Psoas muscle (tissue), 8 donors: ENCODE measurements at regions of chr6 and their contacts with region 1.

Region 1: GRCh38 chr6:56463443-56463842 is 179.2 kb downstream of the DST start:
- DNase-seq: no peak
- ATAC-seq: no peak
- H3K4me3 ChIP-seq: no peak overlapping the region
- H3K27ac ChIP-seq: no peak overlapping the region
- H3K4me1 ChIP-seq: no peaks in the 10 kb centered on the region
- H3K27me3 ChIP-seq: no peaks in the 10 kb centered on the region
- CTCF ChIP-seq: no peak

Region 2: GRCh38 chr6:56517155-56517745 is 53.8 kb after region 1 on chr6:
- intact Hi-C with region 1: loop called in 1 of 2 experiments (anchors 10 kb)
- DNase-seq: no peak
- ATAC-seq: no peak
- H3K4me3 ChIP-seq: no peak overlapping the region
- H3K27ac ChIP-seq: no peak overlapping the region
- H3K4me1 ChIP-seq: no peaks in the 10 kb centered on the region
- H3K27me3 ChIP-seq: no peaks in the 10 kb centered on the region
- CTCF ChIP-seq: no peak